ENCODE measurements at regions of chr18 and their contacts with region 1.

Region 1: DNA sequence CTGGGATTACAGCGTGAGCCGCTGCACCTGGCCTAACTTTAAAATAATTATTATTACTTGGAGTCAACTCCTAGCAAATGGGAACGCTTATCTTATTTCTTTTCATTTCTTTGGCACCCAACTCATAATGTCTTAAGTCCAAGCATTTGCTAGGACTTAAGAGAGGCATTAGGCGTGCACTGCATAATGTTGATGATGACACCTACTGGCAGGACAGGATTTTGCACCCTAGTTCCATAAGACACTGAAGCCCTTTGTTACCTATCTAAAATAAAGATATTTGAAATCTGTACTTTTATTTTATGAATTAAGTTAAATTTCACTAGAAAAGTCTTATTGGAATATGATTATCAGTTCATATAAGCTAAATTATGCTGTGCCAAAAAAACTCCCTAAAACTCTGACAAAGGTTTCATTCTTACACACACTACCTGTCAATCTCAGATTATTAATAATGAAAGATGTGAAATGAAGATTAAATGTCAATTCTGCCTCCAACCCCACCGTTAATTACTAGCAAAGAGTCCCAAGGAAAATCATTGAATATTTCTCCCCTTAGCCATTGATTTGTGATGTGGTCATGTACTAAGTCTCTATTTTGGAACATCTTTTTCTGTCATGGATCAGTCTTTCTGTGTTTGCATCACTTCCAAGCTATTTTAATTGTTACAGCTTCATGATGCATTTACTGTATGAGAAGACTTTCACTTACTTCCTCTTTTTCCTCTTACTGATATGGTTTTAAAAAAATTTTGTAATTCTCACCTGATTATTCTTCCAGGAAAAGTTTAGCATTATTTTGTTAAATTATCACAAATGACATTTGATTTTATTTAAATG is 12.7 kb upstream of the CDH2 start:
- DNase-seq: peak; percentile 37
- H3K4me3 Mint-ChIP-seq: no peak overlapping the region
- H3K27ac Mint-ChIP-seq: no peak overlapping the region
- H3K4me1 Mint-ChIP-seq: no peaks in the 10 kb centered on the region
- H3K27me3 Mint-ChIP-seq: no peaks in the 10 kb centered on the region

Region 2: DNA sequence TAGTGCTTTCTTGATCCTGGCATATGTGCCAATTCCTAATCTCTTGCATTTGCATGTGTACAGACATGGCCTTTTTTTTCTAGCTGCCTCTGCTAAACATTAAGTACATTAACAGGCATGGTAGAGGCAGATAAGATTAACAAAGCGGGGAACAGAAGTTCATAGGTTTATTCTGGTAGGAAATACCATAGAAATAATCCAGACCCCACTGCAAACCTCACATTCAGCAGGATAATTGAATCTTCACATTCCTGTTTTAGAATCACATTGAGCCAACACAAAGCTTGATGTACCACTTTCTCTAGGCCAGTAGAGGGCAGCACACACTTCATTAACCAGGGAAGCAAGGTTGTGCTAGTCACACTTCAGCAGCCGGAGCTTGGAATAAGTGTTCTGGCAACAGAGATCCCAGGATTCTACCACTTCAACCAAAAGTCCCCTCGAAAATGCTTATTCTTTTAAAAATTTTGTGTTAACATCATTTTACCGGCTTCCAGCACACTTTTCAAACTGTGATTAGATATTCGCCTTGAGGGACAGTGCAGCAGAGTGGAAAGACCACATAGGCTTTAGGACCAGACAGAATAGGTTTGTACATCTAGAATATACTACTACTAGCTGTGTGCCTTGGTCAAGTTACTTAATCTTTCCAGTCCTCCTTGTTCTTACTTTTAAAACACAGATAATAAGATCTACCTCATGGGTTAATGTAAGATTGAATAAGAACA is 584.3 kb before region 1 on chr18:
- CTCF ChIA-PET with region 1: no interaction called
- intact Hi-C with region 1: loop called (anchors 1 kb)
- DNase-seq: peak; percentile 50
- H3K4me3 Mint-ChIP-seq: no peak overlapping the region
- H3K27ac Mint-ChIP-seq: no peak overlapping the region
- H3K4me1 Mint-ChIP-seq: no peaks in the 10 kb centered on the region
- H3K27me3 Mint-ChIP-seq: peaks cover 1% of the 10 kb centered on the region

Measured in activated naive CD4-positive, alpha-beta T cell treated with anti-CD3 and anti-CD28 coated beads for 36 hours (primary cell).